Activated B cell treated with CpG ODN at 0.5 μM for 24 hours (primary cell): ENCODE measurements at regions of chr6 and their contacts with region 1.

Region 1: GRCh38 chr6:28080631-28081485 is 490 bp downstream of the ZNF165 start:
- DNase-seq: peak; percentile 89
- ATAC-seq: peak; percentile 68
- H3K4me3 Mint-ChIP-seq: peak overlapping the region; percentile 98
- H3K27ac Mint-ChIP-seq: peak overlapping the region; percentile 97
- H3K4me1 Mint-ChIP-seq: peaks cover 52% of the 10 kb centered on the region
- H3K27me3 Mint-ChIP-seq: no peaks in the 10 kb centered on the region
- CTCF ChIP-seq: no peak

Region 2: DNA sequence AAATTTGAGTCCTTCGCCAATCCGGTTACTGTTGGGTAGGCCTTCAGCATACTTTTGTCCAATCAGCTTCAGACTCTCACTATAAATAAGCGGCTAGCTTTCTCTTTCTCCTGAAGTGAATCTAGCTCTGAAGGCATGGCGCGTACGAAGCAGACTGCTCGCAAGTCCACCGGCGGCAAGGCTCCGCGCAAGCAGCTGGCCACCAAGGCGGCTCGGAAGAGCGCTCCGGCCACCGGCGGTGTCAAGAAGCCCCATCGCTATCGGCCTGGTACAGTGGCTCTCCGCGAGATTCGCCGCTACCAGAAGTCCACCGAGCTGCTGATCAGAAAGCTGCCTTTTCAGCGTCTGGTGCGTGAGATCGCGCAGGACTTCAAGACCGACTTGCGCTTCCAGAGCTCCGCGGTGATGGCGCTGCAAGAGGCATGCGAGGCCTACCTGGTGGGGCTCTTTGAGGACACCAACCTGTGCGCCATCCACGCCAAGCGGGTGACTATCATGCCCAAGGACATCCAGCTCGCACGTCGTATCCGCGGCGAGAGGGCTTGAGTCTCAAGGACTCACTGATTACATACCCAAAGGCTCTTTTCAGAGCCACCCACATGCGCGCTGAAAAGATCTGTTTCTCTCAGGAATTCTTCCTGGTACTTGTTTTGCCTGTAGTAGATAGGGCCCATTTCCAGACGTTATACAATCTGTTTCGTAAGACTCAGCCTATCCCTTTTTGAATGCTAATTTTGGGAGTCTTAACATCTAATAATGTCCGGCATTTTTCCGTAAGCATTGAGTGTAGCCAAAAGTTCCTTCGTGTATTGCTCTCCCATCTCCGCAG is 270.7 kb before region 1 on chr6:
- CTCF ChIA-PET with region 1: no interaction called
- POLR2A ChIA-PET with region 1: no interaction called
- intact Hi-C with region 1: loop called (anchors 5 kb)
- DNase-seq: peak; percentile 68
- ATAC-seq: peak; percentile 59
- H3K4me3 Mint-ChIP-seq: peak overlapping the region; percentile 93
- H3K27ac Mint-ChIP-seq: peak overlapping the region; percentile 97
- H3K4me1 Mint-ChIP-seq: peaks cover 59% of the 10 kb centered on the region
- H3K27me3 Mint-ChIP-seq: no peaks in the 10 kb centered on the region
- CTCF ChIP-seq: no peak

Region 3: DNA sequence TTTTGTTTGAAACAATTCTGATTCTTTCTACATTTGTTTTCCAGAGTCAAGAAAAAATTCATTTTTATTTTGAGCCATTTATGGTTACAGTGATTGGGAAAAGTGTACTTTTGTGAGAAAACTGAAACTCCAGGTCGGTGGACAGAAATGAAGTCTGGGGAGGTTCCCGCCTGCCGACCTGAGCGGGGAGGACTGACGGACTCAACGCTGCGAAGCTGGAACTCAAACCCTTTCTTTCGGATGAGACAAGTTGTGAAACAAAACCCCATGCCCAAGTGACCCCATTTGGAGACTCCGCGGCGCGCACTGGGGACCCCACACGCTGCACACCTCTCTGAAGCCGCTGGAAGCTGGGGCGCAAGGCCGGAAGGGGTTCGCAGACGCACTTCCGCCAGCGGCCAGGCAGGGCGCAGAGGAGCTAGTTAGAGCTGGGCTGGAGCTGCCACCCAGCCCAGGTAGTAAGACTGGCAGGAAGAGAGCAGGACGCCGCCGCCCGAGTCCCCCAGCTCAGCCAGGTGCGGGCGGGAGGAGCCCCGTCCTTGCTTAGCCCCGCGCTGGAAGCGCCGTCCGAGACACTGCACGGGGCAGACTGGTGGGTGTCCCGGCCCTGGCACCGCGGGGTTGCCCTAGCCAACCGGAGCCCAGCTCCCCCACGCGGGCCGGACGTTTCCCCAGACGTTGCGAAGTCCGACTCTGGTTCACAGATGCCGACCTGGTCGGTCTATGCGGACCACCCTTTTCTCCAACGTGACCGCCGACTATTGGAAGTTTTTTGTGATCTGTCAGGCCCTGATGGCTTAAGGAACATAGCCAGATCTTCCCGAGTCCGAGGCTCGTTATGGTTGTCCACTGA is 23.8 kb after region 1 on chr6:
- CTCF ChIA-PET with region 1: interaction called, 3 read pairs
- POLR2A ChIA-PET with region 1: interaction called, 26 read pairs
- intact Hi-C with region 1: loop called (anchors 1 kb)
- DNase-seq: peak; percentile 80
- ATAC-seq: peak; percentile 98
- H3K4me3 Mint-ChIP-seq: peak overlapping the region; percentile 94
- H3K27ac Mint-ChIP-seq: peak overlapping the region; percentile 95
- H3K4me1 Mint-ChIP-seq: peaks cover 10% of the 10 kb centered on the region
- H3K27me3 Mint-ChIP-seq: peaks cover 6% of the 10 kb centered on the region
- CTCF ChIP-seq: no peak

Region 4: DNA sequence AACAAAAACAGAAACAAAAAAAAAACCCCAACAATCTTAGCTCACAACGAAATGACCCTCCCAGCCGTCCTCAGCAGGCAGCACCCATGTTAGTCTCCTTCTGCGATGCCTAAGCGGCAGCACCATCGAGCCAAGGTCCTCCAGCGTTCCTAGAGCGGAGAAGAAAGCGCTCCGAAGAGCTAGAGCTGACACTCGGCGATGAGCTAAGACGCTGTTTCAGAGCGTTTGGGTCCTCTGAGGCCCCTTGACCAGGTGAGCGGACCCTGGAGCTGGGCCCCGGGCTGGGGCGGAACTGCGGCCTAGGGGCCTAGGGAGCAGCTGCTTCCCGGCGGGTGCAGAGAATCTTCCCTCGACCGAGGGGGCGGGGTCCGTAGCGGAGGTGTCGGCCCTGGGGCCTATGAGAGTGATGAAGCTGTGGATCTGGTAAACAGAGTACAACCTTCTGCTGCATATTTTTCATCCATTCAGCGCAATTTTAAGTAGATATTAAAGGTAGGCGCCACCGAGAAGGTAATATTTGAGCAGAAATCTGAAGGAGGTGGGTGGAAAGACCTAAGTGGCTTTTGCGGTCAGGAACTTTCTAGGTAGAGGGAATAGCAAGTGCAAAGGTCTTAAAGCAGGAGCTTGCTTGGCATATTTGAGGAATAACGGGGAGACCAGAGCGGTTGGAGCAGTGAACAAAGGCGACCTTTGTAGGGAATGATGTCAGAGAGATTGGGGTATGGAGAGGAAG is 186.3 kb after region 1 on chr6 and contains the start of gene ZSCAN26:
- CTCF ChIA-PET with region 1: no interaction called
- POLR2A ChIA-PET with region 1: interaction called, 7 read pairs
- intact Hi-C with region 1: loop called (anchors 5 kb)
- DNase-seq: peak; percentile 77
- ATAC-seq: peak; percentile 96
- H3K4me3 Mint-ChIP-seq: no peak within 1 kb of the TSS
- H3K27ac Mint-ChIP-seq: peak within 1 kb of the TSS; percentile 46
- H3K4me1 Mint-ChIP-seq: peaks cover 10% of the 10 kb centered on the region
- H3K27me3 Mint-ChIP-seq: no peaks in the 10 kb centered on the region
- CTCF ChIP-seq: no peak
- total RNA-seq, gene ZSCAN26: 16.0 and 17.8 TPM in 2 replicates

Region 5: DNA sequence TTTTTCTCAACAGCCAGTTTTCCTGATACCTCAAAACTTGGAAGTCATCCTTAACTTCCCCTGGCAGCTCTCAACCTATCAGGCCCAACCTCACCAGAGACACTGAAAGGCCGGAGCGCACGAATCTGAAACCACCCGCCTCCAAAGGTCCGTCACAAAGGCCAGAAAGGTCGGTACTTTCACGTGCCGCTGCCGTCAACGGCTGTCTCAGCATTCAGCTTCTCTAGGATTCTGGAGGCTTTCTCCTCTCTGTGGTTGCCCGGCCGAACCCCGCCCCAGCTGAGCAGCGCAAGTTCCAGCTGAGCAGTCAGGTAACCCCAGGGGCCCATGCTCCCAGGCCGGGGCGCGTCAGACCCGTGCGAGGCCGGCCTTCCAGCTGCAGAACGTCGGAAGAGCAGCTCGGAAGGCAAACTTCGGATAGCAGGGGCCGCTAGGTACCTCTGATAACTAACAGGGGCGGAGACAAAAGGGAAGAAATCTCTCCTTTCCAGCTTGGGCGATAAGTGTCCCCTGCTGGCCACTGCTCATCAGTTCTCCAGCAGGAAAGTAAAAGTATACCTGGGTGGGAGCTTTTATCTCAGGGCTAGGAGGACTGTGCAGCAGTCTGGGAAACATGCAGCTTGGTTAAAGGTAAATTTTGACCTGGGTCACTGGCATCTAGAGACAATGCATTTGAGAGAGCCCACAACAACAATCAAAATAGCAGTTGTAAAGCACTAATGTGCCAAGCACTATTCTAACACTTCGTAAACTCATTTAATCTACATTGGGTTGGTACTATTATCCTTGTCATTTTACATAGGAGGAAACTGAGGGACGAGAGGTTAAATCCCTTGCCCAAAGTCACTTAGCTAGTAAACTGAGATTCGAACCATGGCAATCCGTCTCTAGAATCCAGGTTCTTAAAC is 302.6 kb after region 1 on chr6:
- CTCF ChIA-PET with region 1: no interaction called
- POLR2A ChIA-PET with region 1: interaction called, 7 read pairs
- intact Hi-C with region 1: loop called (anchors 1 kb)
- DNase-seq: peak; percentile 77
- ATAC-seq: peak; percentile 98
- H3K4me3 Mint-ChIP-seq: peak overlapping the region; percentile 88
- H3K27ac Mint-ChIP-seq: peak overlapping the region; percentile 94
- H3K4me1 Mint-ChIP-seq: peaks cover 18% of the 10 kb centered on the region
- H3K27me3 Mint-ChIP-seq: no peaks in the 10 kb centered on the region
- CTCF ChIP-seq: no peak